Activated T-helper 1 cell treated with anti-CD3 and anti-CD28 coated beads, Interleukin-12 subunit alpha, Interleukin-12 subunit beta, Interleukin-2, Interleukin-4 antibody, amounts not matched to agents 30 ng/mL and 10 ng/mL and 1 ng/mL, durations not matched to agents 14 hours and 24 hours and 36 hours (primary cell): ENCODE measurements at regions of chr10 and their contacts with region 1.

Region 1: GRCh38 chr10:45000752-45001380 is at the start of gene ZNF22:
- DNase-seq: peak; percentile 61
- H3K4me3 Mint-ChIP-seq: peak within 1 kb of the TSS; percentile 93
- H3K27ac Mint-ChIP-seq: peak within 1 kb of the TSS; percentile 96
- H3K4me1 Mint-ChIP-seq: peaks cover 34% of the 10 kb centered on the region
- H3K27me3 Mint-ChIP-seq: peaks cover 7% of the 10 kb centered on the region
- total RNA-seq, gene ZNF22: 23.1 and 25.6 TPM in 2 replicates

Region 2: DNA sequence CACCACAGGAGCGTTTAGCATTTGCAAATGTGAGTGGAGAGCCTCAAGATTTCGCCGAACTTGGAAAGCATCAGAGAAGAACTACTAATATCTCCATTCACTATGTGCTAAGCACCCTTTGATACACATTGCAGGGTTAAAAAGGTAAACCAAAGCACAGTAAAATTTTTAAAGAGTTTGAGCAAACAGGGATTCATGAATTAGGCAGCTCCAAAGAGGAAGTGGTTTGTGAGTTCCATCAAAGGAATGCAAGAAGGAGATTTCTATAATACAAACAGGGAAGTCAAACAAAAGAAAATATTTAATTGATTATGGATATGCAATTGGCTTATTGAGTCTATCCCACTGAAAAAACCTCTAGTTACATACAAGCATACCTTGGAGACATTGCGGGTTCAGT is 170.8 kb before region 1 on chr10:
- intact Hi-C with region 1: no loop called
- DNase-seq: no peak
- H3K4me3 Mint-ChIP-seq: no peak overlapping the region
- H3K27ac Mint-ChIP-seq: no peak overlapping the region
- H3K4me1 Mint-ChIP-seq: no peaks in the 10 kb centered on the region
- H3K27me3 Mint-ChIP-seq: peaks cover 5% of the 10 kb centered on the region

Region 3: DNA sequence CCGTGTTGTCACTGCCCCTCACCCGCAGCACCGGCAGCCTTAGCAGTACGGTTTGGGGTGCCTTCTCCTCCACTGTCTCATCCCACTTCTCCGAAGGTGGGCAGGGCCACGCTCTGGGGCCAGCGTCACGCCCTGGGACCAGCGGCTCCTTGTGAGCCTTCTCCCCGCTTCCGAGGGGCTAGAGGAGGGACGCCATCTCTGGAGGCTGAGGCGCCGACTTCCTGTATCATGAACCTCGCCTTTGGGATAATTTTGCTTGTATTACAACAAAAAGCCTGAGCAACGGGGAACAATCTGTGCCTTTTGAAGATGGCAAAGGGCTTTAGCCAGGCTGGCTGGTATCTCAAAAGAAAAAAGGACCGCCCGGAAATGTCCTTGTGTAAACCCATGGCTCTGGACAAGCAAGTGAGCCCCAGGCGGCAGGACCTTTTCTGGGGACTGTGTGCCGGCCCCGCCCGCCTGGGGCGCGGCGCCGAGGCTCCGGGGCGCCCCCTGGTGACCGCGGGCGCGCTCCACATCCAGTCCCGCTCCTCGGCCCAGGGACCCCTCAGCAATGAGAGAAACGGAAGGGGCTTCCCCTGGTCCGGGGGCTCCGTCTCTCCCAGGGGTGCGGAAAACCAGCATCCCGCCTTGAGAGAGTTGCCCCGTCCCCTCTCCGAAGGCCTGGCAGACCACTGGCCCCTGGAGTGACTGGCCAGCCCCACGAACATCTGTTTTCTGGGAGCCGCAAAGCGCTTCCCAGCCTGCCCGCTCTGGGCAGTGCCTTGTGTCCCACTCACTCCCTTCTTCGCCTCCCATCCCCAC is 26.0 kb before region 1 on chr10:
- intact Hi-C with region 1: loop called (anchors 1 kb)
- DNase-seq: peak; percentile 66
- H3K4me3 Mint-ChIP-seq: peak overlapping the region; percentile 75
- H3K27ac Mint-ChIP-seq: peak overlapping the region; percentile 40
- H3K4me1 Mint-ChIP-seq: peaks cover 35% of the 10 kb centered on the region
- H3K27me3 Mint-ChIP-seq: no peaks in the 10 kb centered on the region

Region 4: GRCh38 chr10:45135443-45136198 is 134.8 kb after region 1 on chr10:
- intact Hi-C with region 1: no loop called
- DNase-seq: no peak
- H3K4me3 Mint-ChIP-seq: no peak overlapping the region
- H3K27ac Mint-ChIP-seq: no peak overlapping the region
- H3K4me1 Mint-ChIP-seq: no peaks in the 10 kb centered on the region
- H3K27me3 Mint-ChIP-seq: peaks cover 6% of the 10 kb centered on the region